Left cardiac atrium (tissue), 4 donors: ENCODE measurements at regions of chr9 and their contacts with region 1.

Region 1: GRCh38 chr9:72022841-72023240 is 37.6 kb downstream of the C9orf57 start:
- DNase-seq: no peak
- ATAC-seq: no peak

Region 2: GRCh38 chr9:71285191-71285656 is 737.6 kb before region 1 on chr9:
- intact Hi-C with region 1: loop called in 1 of 2 experiments (anchors 10 kb)
- DNase-seq: peak; percentile 22
- ATAC-seq: peak; percentile 57 to 69

Region 3: DNA sequence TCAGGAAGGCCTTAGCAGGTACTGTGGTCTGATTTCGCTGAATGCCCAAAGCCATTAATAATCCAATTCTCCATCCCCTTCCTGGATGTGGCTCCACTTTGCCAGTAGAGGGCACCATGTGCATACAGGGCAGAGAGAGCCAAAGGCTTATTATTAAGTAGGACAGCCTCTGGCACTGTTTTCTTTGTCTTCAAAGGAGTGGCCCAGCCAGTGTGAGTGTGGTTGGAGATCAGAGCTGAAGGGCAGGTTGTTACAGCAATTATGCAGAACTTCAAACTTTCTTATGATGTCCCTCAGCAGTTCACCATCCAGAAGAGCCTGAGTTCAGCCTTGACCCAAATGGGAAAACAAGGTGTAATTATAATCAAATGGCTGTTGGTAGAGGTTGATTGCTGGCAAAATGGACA is 215.9 kb before region 1 on chr9:
- intact Hi-C with region 1: loop called (anchors 2 to 5 kb)
- DNase-seq: peak; percentile 48
- ATAC-seq: peak; percentile 90 to 96

Region 4: GRCh38 chr9:71928832-71929604 is 93.8 kb before region 1 on chr9:
- intact Hi-C with region 1: no loop called
- DNase-seq: no peak
- ATAC-seq: no peak

Region 5: DNA sequence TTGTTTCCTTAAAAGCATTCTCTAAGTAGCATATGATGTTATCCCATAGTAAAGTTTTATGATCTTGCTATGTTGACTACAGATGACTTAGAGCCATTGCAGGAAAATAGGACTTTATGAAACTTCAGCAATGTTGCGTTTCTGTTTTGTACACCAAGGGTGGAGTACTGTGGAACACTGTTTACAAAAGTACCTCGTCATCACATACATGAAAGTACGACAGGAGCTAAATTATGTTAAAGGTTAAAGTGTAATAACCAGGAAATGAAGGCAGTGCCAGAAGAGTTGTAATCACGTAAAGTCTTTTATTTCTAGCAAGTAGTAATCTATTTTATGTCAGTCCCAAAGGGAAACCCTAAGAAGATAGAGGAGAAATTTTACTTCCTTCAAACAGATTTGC is 60.5 kb before region 1 on chr9:
- intact Hi-C with region 1: loop called in 1 of 2 experiments (anchors 10 kb)
- DNase-seq: no peak
- ATAC-seq: no peak